ENCODE measurements at regions of chr3 and their contacts with region 1.

Region 1: GRCh38 chr3:13657660-13658435 is 108.9 kb downstream of the FBLN2 start:
- DNase-seq: no peak
- ATAC-seq: peak; percentile 89
- H3K4me3 ChIP-seq: no peak overlapping the region
- H3K27ac ChIP-seq: no peak overlapping the region
- H3K4me1 ChIP-seq: no peaks in the 10 kb centered on the region
- H3K27me3 ChIP-seq: no peaks in the 10 kb centered on the region
- CTCF ChIP-seq: peak; percentile 91

Region 2: DNA sequence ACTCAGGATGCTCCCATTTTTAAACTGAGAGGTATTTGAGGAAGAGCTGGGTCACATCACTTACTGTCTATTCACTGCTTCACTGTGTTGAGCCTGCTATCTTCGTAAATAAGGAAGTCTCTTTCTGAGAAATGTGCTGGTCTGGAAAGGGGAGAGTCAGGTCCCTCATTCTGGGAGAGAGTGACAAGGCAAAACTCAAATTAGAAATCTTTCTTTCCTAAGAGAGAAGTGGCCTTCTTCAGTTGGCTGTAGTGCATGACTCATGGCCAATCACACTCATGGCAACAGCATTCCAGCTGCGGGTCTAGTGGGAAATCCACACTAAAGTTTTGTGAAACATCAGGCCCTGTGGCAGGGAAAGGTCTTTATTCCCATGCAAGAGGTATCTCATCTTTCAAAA is 1487.6 kb before region 1 on chr3:
- CTCF ChIA-PET with region 1: no interaction called
- POLR2A ChIA-PET with region 1: no interaction called
- in situ Hi-C with region 1: no loop called
- intact Hi-C with region 1: no loop called
- DNase-seq: no peak
- ATAC-seq: no peak
- H3K4me3 ChIP-seq: no peak overlapping the region
- H3K27ac ChIP-seq: no peak overlapping the region
- H3K4me1 ChIP-seq: no peaks in the 10 kb centered on the region
- H3K27me3 ChIP-seq: no peaks in the 10 kb centered on the region
- CTCF ChIP-seq: no peak

Region 3: DNA sequence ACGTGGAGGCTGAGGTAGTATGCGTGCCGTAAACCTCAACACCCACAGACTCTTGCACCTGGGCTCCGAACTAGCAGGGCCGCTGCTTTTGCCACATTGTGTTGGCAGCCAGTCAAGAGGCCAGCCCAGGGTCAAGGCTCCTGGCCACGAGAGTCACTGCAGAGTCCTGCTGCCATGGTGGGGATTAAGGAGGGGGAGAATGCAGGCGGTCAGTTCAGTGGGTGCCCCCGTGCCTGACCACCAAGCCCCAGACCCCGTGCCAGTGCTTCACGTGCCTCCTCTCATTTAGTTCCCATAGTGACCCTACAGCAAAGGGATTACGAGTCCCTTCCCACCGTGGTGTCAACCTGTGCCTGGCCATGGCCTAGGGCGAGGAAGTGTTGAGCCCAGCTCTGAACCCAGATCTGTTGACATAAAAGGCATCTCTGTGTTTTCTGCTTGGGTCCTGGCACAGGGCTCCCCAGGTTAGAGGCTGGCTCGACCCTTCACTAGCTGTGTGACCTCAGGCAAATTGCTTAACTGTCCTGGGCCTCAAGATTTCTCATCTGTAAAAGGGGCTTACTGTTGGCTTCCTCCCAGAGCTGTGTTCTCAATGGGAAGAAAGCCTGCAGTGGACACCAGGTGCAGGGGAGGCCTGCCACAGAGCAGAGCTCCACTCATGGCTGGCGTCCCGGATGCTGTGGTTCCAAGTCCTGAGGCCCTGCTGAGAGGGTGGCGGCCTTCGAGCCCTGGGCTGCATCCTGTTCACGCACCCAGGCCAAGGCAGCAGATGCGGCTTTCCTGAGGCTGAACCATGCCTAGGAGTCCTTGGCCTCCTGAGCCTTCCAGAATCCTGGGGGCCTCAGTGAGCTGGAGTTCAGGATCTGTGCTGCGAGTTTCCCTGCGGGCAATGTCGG is 76.1 kb before region 1 on chr3:
- CTCF ChIA-PET with region 1: no interaction called
- POLR2A ChIA-PET with region 1: no interaction called
- in situ Hi-C with region 1: no loop called
- intact Hi-C with region 1: no loop called
- DNase-seq: no peak
- ATAC-seq: peak; percentile 59
- H3K4me3 ChIP-seq: no peak overlapping the region
- H3K27ac ChIP-seq: no peak overlapping the region
- H3K4me1 ChIP-seq: no peaks in the 10 kb centered on the region
- H3K27me3 ChIP-seq: no peaks in the 10 kb centered on the region
- CTCF ChIP-seq: no peak

Region 4: GRCh38 chr3:13792512-13793371 is 134.9 kb after region 1 on chr3:
- CTCF ChIA-PET with region 1: no interaction called
- POLR2A ChIA-PET with region 1: no interaction called
- in situ Hi-C with region 1: no loop called
- intact Hi-C with region 1: no loop called
- DNase-seq: no peak
- ATAC-seq: no peak
- H3K4me3 ChIP-seq: no peak overlapping the region
- H3K27ac ChIP-seq: no peak overlapping the region
- H3K4me1 ChIP-seq: no peaks in the 10 kb centered on the region
- H3K27me3 ChIP-seq: no peaks in the 10 kb centered on the region; the same call in 1 of the 2 replicates
- CTCF ChIP-seq: no peak

Region 5: GRCh38 chr3:13884851-13885703 is 227.2 kb after region 1 on chr3:
- CTCF ChIA-PET with region 1: interaction called, 23 read pairs
- POLR2A ChIA-PET with region 1: no interaction called
- in situ Hi-C with region 1: no loop called
- intact Hi-C with region 1: loop called (anchors 1 kb)
- DNase-seq: no peak
- ATAC-seq: peak; percentile 65; the same call in 1 of the 2 replicates
- H3K4me3 ChIP-seq: no peak overlapping the region
- H3K27ac ChIP-seq: no peak overlapping the region
- H3K4me1 ChIP-seq: no peaks in the 10 kb centered on the region; the same call in 1 of the 2 replicates
- H3K27me3 ChIP-seq: peaks cover 5% of the 10 kb centered on the region
- CTCF ChIP-seq: peak; percentile 86